K562 (cell line): ENCODE measurements at regions of chr4 and their contacts with region 1.

Region 1: GRCh38 chr4:22688236-22688635 is 4.5 kb upstream of the GBA3 start:
- DNase-seq: no peak
- ATAC-seq: no peak
- H3K4me3 ChIP-seq: no peak overlapping the region
- H3K27ac ChIP-seq: no peak overlapping the region
- H3K4me1 ChIP-seq: no peaks in the 10 kb centered on the region
- H3K27me3 ChIP-seq: no peaks in the 10 kb centered on the region
- CTCF ChIP-seq: no peak
- EP300 ChIP-seq: no peak
- POLR2A ChIP-seq: no peak
- RAD21 ChIP-seq: no peak

Region 2: GRCh38 chr4:21790438-21791029 is 897.7 kb before region 1 on chr4:
- CTCF ChIA-PET with region 1: interaction called, 5 read pairs
- POLR2A ChIA-PET with region 1: no interaction called
- in situ Hi-C with region 1: loop called (anchors 5 kb)
- intact Hi-C with region 1: loop called (anchors 1 kb)
- DNase-seq: peak; percentile 3 to 18 (median 8)
- ATAC-seq: peak; percentile 44; the same call in 1 of the 3 replicates
- H3K4me3 ChIP-seq: no peak overlapping the region
- H3K27ac ChIP-seq: no peak overlapping the region
- H3K4me1 ChIP-seq: no peaks in the 10 kb centered on the region
- H3K27me3 ChIP-seq: no peaks in the 10 kb centered on the region
- CTCF ChIP-seq: peak; percentile 17 to 57 (median 20); a peak in 3 of 6 replicates
- EP300 ChIP-seq: no peak
- POLR2A ChIP-seq: no peak
- RAD21 ChIP-seq: peak; percentile 46 to 65

Region 3: GRCh38 chr4:22897520-22898108 is 209.4 kb after region 1 on chr4:
- CTCF ChIA-PET with region 1: no interaction called
- POLR2A ChIA-PET with region 1: no interaction called
- in situ Hi-C with region 1: no loop called
- intact Hi-C with region 1: no loop called
- DNase-seq: peak; percentile 26 to 40 (median 36)
- ATAC-seq: peak; percentile 54; the same call in 1 of the 3 replicates
- H3K4me3 ChIP-seq: no peak overlapping the region
- H3K27ac ChIP-seq: no peak overlapping the region
- H3K4me1 ChIP-seq: no peaks in the 10 kb centered on the region
- H3K27me3 ChIP-seq: no peaks in the 10 kb centered on the region
- CTCF ChIP-seq: peak; percentile 28 to 66 (median 60); a peak in 5 of 6 replicates
- EP300 ChIP-seq: no peak
- POLR2A ChIP-seq: no peak
- RAD21 ChIP-seq: peak; percentile 37 to 52; a peak in 3 of 4 replicates